ENCODE measurements at regions of chr2 and their contacts with region 1.

Region 1: DNA sequence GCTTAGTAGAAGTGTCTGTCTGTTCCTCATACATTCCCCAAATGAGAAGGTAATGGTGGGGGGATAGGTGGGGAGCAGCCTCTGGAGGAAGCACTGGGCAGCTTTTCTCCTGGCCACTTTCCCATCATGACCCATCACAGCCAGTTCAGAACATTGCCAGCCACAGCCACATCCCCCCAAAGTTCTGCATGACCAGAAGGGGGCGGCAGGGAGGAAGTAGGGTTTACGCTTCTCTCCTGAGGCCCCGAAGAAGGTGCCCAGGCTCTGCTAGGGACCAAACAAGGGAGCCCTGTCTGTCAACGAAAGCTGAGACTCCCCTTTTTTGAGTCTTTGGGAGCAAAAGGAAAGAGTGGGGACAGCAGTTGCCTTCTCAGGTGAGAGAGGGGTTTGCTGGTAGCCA is 7.7 kb downstream of the IGFBP5 start:
- DNase-seq: peak in 1 of 2 experiments; percentile 92
- H3K4me3 ChIP-seq: no peak overlapping the region
- H3K27ac ChIP-seq: no peak overlapping the region
- H3K4me1 ChIP-seq: peaks cover 9 to 18% (median 12%) of the 10 kb centered on the region in 4 experiments; a peak in 6 of 7 replicates
- H3K27me3 ChIP-seq: peaks cover 0 to 12% (median 4%) of the 10 kb centered on the region in 4 experiments; a peak in 5 of 7 replicates
- CTCF ChIP-seq: peak; percentile 89 to 92 (median 90)
- EP300 ChIP-seq: no peak
- POLR2A ChIP-seq: no peak
- RAD21 ChIP-seq: peak; percentile 65 to 81

Region 2: GRCh38 chr2:216283038-216283900 is 404.4 kb before region 1 on chr2:
- CTCF ChIA-PET with region 1: no interaction called
- POLR2A ChIA-PET with region 1: no interaction called
- DNase-seq: peak; percentile 83 to 95
- H3K4me3 ChIP-seq: no peak overlapping the region
- H3K27ac ChIP-seq: no peak overlapping the region
- H3K4me1 ChIP-seq: peaks cover 11 to 38% (median 18%) of the 10 kb centered on the region in 4 experiments
- H3K27me3 ChIP-seq: no peaks in the 10 kb centered on the region
- CTCF ChIP-seq: peak; percentile 88 to 100 (median 99)
- EP300 ChIP-seq: no peak
- POLR2A ChIP-seq: no peak
- RAD21 ChIP-seq: peak; percentile 76 to 83

Region 3: GRCh38 chr2:216622526-216622925 is 65.1 kb before region 1 on chr2:
- CTCF ChIA-PET with region 1: no interaction called
- POLR2A ChIA-PET with region 1: no interaction called
- DNase-seq: no peak
- H3K4me3 ChIP-seq: no peak overlapping the region
- H3K27ac ChIP-seq: no peak overlapping the region
- H3K4me1 ChIP-seq: peaks cover 10 to 17% (median 14%) of the 10 kb centered on the region in 4 experiments
- H3K27me3 ChIP-seq: no peaks in the 10 kb centered on the region; a peak in 1 of 7 replicates
- CTCF ChIP-seq: no peak
- EP300 ChIP-seq: no peak
- POLR2A ChIP-seq: no peak
- RAD21 ChIP-seq: no peak

Region 4: DNA sequence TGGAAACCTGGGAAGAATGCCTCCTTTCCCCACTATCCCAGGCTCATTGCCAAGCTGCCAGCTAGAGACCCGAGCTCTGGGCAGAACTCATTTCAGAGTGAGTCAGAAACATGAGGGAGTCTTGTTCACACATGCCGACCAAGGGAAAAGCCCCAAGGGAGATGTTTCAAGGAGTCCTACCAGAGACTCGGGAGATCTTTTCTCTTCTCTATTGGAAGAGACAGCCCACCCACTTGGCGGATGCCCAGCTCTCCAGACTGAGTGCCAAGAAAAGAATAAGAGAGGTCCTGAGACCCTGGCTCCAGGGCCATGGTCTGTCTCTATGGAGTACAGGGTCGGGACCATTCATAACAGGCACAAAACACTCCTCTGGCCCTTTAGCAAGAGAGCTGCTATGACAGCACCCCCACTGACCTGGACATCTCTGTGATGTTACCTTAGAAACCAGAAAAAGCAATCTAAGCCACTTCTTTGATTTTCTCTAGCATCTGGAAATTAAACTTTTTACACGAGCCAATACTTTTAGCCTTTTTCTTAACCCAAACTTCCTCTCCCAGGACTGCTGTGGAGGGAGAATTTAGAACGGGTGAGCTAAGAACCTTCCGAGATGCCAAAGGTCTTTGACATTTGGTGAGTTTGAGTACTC is 26.2 kb after region 1 on chr2:
- CTCF ChIA-PET with region 1: interaction called, 13 read pairs
- POLR2A ChIA-PET with region 1: no interaction called
- DNase-seq: no peak
- H3K4me3 ChIP-seq: no peak overlapping the region
- H3K27ac ChIP-seq: no peak overlapping the region
- H3K4me1 ChIP-seq: peaks cover 0 to 2% (median 0%) of the 10 kb centered on the region in 4 experiments; a peak in 1 of 7 replicates
- H3K27me3 ChIP-seq: no peaks in the 10 kb centered on the region
- CTCF ChIP-seq: no peak
- EP300 ChIP-seq: no peak
- POLR2A ChIP-seq: no peak
- RAD21 ChIP-seq: no peak

Region 5: DNA sequence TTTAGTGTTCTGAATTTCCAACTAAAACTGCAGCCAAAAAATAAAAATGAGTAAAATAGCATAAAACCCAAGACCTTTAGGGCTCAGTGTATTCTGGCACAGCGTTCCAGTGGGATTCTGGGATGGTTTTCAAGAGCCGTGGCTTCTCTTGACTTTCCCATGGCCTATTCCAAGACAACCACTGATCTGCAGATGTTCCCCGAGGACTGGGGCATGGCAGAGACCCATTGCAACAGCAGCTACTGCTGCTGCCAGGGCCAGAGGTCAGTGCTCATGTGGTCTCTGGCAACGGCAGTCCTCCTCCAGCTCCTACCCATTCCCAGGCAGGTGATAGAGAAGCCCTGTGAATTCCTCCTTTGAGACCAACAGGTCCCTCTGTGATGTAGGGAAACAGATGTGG is 145.4 kb after region 1 on chr2:
- CTCF ChIA-PET with region 1: no interaction called
- POLR2A ChIA-PET with region 1: no interaction called
- DNase-seq: no peak
- H3K4me3 ChIP-seq: no peak overlapping the region
- H3K27ac ChIP-seq: no peak overlapping the region
- H3K4me1 ChIP-seq: no peaks in the 10 kb centered on the region
- H3K27me3 ChIP-seq: no peaks in the 10 kb centered on the region
- CTCF ChIP-seq: no peak
- EP300 ChIP-seq: no peak
- POLR2A ChIP-seq: no peak
- RAD21 ChIP-seq: no peak